Ovary (tissue), 10 donors: ENCODE measurements at regions of chr1 and their contacts with region 1.

Region 1: DNA sequence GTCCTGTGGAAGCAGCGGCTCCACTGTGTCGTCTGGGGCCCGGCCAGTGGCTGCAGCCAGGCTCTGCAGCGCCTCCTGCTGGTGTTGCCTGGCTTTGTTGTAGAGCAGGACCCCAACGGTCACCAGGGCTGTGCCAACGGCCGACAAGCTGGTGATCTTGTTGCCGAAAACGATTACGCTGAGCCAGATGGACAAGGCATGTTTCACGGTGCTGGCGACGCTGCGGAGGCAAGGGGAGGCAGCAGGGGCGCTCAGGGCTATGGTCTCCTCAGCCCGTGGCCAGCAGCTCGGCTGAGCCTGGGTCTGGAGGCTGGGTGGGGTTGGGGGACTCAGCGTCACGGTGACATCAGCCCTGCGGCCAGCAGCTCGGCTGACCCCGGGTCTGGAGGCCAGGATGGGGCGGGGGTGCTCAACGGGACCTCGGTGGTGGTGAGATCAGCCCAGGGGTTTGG is 7.0 kb upstream of the CDK11B start:
- DNase-seq: peak in 2 of 5 donors; percentile 46 to 51
- H3K4me3 ChIP-seq: no peak overlapping the region
- H3K27ac ChIP-seq: no peak overlapping the region
- H3K4me1 ChIP-seq: no peaks in the 10 kb centered on the region
- H3K27me3 ChIP-seq: no peaks in the 10 kb centered on the region
- CTCF ChIP-seq: peak in 2 of 3 donors; percentile 17 to 19
- EP300 ChIP-seq: no peak
- POLR2A ChIP-seq: no peak

Region 2: GRCh38 chr1:1730870-1731269 is 65.0 kb after region 1 on chr1:
- intact Hi-C with region 1: loop called in 1 of 4 experiments (anchors 5 kb)
- DNase-seq: peak in 2 of 5 donors; percentile 10 to 12
- H3K4me3 ChIP-seq: no peak overlapping the region
- H3K27ac ChIP-seq: no peak overlapping the region
- H3K4me1 ChIP-seq: no peaks in the 10 kb centered on the region
- H3K27me3 ChIP-seq: no peaks in the 10 kb centered on the region
- CTCF ChIP-seq: no peak
- EP300 ChIP-seq: no peak
- POLR2A ChIP-seq: no peak

Region 3: GRCh38 chr1:2025534-2025981 is 359.7 kb after region 1 on chr1:
- intact Hi-C with region 1: no loop called
- DNase-seq: peak; percentile 54 to 83 (median 59)
- H3K4me3 ChIP-seq: no peak overlapping the region
- H3K27ac ChIP-seq: no peak overlapping the region
- H3K4me1 ChIP-seq: peaks cover 4% of the 10 kb centered on the region
- H3K27me3 ChIP-seq: no peaks in the 10 kb centered on the region
- CTCF ChIP-seq: no peak
- EP300 ChIP-seq: no peak
- POLR2A ChIP-seq: no peak